ENCODE measurements at regions of chr11 and their contacts with region 1.

Region 1: GRCh38 chr11:107017433-107018227 is 646 bp downstream of the GUCY1A2 start:
- ATAC-seq: peak; percentile 69 to 81 (median 80)
- H3K4me3 ChIP-seq: peak overlapping the region; percentile 61 to 89 (median 82)
- H3K27ac ChIP-seq: peak overlapping the region; percentile 54 to 83
- H3K4me1 ChIP-seq: peaks cover 7 to 11% of the 10 kb centered on the region in 2 donors

Region 2: DNA sequence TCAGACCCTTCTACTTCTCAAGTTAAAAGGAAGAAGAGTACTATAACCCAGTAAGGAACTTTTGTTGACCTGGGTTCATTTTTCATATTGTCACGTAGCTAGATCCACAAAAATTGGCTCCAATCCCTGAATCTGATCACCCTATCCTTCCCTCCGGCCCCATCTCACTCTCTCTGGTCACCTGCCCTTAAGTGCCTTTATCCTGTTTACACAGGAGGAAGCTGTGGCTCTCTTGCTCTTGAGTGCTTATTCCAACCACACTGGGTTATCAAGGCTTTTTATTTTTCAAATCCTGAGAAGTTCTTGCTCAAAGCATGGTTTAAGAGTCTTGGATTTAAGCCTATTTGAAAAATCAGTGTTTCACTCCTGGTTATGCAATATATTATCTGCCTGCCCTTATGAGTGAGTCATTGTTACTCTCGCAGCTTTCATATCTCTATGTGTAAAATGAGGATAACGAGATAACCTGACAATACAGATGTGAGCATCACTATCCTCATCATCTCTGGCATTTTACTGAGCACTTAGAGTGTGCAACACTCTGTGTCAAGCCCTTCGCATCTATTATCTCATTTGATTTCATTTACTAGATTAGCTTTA is 293.2 kb before region 1 on chr11:
- in situ Hi-C with region 1: loop called in 3 of 9 experiments (anchors 10 to 25 kb)
- ATAC-seq: no peak
- H3K4me3 ChIP-seq: no peak overlapping the region
- H3K27ac ChIP-seq: no peak overlapping the region
- H3K4me1 ChIP-seq: no peaks in the 10 kb centered on the region

Region 3: GRCh38 chr11:106733635-106734034 is 284.0 kb before region 1 on chr11:
- in situ Hi-C with region 1: loop called in 3 of 9 experiments (anchors 10 to 25 kb)
- ATAC-seq: peak in 4 of 8 experiments; percentile 31 to 71 (median 60)
- H3K4me3 ChIP-seq: no peak overlapping the region
- H3K27ac ChIP-seq: no peak overlapping the region
- H3K4me1 ChIP-seq: no peaks in the 10 kb centered on the region